MCF 10A (cell line): ENCODE measurements at regions of chr14 and their contacts with region 1.

Region 1: DNA sequence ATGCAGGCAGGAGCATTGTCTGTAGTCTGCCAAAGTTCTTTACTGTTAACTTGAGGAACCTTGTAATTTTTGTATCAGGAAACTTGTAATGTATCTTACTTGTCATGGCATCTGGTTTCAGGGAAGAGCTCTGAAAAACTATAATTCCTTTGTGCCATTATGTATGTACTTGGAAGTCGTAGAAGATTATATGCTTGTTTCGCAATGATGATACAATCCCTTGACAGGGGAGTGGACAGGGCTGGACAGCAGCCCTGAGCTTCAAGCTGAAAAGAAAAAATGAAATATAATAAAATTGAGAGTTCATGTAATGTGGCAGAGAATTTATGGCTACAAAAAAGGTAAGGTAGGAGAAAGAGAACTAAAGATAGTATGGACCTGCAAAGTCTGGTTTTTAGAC is 7.4 kb upstream of the DLGAP5 start:
- DNase-seq: peak; percentile 22
- H3K4me3 Mint-ChIP-seq: no peak overlapping the region
- H3K27ac Mint-ChIP-seq: no peak overlapping the region
- H3K4me1 Mint-ChIP-seq: no peaks in the 10 kb centered on the region
- H3K27me3 Mint-ChIP-seq: no peaks in the 10 kb centered on the region
- CTCF ChIP-seq: no peak

Region 2: DNA sequence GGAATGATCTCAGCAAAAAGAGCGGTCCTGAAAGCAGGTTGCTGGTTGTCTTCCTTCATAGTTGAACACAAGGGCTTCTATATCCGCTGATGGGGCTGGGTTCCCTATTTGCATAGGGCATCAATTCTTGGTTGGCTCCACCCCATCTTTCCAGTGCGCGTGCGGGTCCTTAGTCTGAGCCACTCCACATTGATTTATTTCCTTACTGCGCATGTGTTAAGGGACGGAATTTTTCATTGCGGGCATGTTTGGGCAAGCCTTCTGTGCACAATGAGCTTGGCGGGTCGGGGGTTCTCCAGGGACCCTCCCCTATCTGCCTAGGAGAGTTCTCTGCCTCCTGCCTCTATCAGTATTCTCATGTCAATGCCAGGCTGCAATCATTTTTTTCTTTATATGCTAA is 13.9 kb after region 1 on chr14:
- CTCF ChIA-PET with region 1: interaction called, 7 read pairs
- POLR2A ChIA-PET with region 1: interaction called, 16 read pairs
- intact Hi-C with region 1: no loop called
- DNase-seq: peak; percentile 82
- H3K4me3 Mint-ChIP-seq: peak overlapping the region; percentile 16
- H3K27ac Mint-ChIP-seq: peak overlapping the region; percentile 87
- H3K4me1 Mint-ChIP-seq: peaks cover 14% of the 10 kb centered on the region
- H3K27me3 Mint-ChIP-seq: no peaks in the 10 kb centered on the region
- CTCF ChIP-seq: no peak